ENCODE measurements at regions of chr12 and their contacts with region 1.

Region 1: GRCh38 chr12:22624870-22625761 is at the start of gene ETNK1:
- DNase-seq: peak; percentile 73 to 95 (median 81)
- ATAC-seq: peak; percentile 91
- H3K4me3 ChIP-seq: peak within 1 kb of the TSS; percentile 56
- H3K27ac ChIP-seq: peak within 1 kb of the TSS; percentile 93
- H3K4me1 ChIP-seq: peaks cover 5 to 10% of the 10 kb centered on the region in 2 experiments; a peak in 3 of 5 replicates
- H3K27me3 ChIP-seq: no peaks in the 10 kb centered on the region
- CTCF ChIP-seq: no peak
- EP300 ChIP-seq: no peak
- POLR2A ChIP-seq: peak; percentile 94
- RAD21 ChIP-seq: no peak
- polyA plus RNA-seq, gene ETNK1: 36.0 to 47.5 TPM

Region 2: GRCh38 chr12:20722142-20722541 is 1903.0 kb before region 1 on chr12:
- CTCF ChIA-PET with region 1: no interaction called
- POLR2A ChIA-PET with region 1: no interaction called
- in situ Hi-C with region 1: no loop called
- intact Hi-C with region 1: no loop called
- DNase-seq: no peak
- ATAC-seq: no peak
- H3K4me3 ChIP-seq: no peak overlapping the region
- H3K27ac ChIP-seq: no peak overlapping the region
- H3K4me1 ChIP-seq: no peaks in the 10 kb centered on the region
- H3K27me3 ChIP-seq: no peaks in the 10 kb centered on the region
- CTCF ChIP-seq: no peak
- EP300 ChIP-seq: no peak
- POLR2A ChIP-seq: no peak
- RAD21 ChIP-seq: no peak

Region 3: DNA sequence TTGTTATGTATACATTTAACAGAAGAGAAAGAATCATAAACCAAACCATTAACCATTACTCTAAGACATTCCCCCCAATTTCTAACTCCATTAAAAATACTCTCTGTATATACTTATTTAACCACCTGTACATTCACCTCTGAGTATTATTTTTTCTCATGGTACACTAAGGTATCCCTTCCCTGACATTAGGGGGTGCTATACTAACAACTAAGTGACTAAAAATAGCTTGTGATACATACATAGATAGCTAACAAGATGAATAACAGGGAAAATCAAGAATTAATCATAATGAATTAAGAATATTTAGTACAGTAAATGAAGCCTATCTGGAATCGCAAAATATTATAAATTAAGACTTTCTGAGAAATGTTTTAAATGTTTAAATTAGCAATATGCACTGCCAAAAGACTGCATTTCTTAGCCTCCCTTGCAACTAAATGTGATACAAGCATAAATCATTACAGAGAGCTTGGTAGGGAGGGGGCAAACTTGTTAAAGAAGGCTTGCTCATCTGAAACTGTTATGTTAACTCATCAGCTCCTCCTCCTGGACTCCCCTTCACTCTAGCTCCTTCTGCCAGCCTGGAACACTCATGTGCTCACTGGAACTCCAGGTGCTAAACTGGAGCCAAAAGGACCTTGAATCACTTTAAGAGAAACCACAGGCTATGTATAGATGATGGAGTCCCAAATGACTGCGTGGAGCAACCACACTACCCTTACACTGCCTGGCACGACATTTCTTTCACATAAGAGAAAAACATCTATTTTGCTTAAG is 95.6 kb before region 1 on chr12:
- CTCF ChIA-PET with region 1: no interaction called
- POLR2A ChIA-PET with region 1: no interaction called
- in situ Hi-C with region 1: no loop called
- intact Hi-C with region 1: loop called (anchors 5 kb)
- DNase-seq: peak; percentile 6 to 25 (median 22)
- ATAC-seq: peak; percentile 81
- H3K4me3 ChIP-seq: no peak overlapping the region
- H3K27ac ChIP-seq: no peak overlapping the region
- H3K4me1 ChIP-seq: no peaks in the 10 kb centered on the region
- H3K27me3 ChIP-seq: no peaks in the 10 kb centered on the region
- CTCF ChIP-seq: peak in 1 of 3 experiments; percentile 52; a peak in 3 of 6 replicates
- EP300 ChIP-seq: no peak
- POLR2A ChIP-seq: no peak
- RAD21 ChIP-seq: peak in 1 of 2 experiments; percentile 45; a peak in 3 of 4 replicates

Region 4: DNA sequence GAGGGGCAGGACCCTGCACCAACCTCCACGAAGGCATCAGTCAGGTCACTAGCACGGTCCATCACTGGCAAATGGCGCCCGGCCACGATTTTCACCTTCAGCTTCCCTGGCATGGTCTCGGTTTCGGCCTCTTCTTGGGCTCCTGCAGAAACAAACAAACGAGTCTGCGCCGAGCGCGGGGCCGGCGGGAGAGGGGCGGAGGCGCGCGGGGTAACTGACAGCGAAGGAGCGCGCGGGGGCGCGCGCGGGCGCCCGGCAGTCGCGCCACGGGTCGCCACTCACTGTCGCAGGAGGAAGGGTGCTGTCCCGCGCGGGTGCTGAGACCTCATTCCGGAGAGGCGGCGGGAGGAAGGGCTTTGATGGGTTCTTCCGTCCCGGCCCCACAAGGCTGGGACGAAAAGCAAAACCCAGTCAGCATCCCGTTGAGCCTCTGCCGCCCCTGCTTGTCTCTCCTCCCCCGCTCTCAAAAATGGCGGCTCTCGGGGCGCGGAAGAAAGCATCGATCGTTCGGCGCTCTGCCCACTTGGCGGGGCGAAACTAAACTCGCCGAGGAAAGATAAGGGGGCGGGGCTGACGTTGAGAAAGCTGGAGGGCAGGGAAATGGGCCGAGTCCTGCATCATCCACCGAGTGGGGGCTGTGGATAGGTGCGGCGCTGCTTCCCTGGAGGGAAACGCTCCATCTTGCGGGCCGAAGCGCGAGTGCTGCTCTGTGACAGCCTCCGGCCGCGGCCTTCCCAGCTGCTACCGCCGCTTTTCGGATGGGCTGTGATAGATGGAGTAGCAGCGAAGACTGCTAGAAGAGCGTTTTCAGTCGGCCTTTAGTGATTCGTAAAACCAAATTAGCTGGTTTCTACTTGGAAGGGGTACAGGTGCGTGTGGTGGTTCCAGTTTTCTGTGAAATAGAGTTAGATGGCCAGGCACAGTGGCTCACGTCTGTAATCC is 80.8 kb before region 1 on chr12 and contains the start of gene C2CD5:
- CTCF ChIA-PET with region 1: no interaction called
- POLR2A ChIA-PET with region 1: no interaction called
- in situ Hi-C with region 1: no loop called
- intact Hi-C with region 1: loop called (anchors 5 kb)
- DNase-seq: peak; percentile 76 to 96 (median 82)
- ATAC-seq: peak; percentile 93
- H3K4me3 ChIP-seq: peak within 1 kb of the TSS; percentile 56
- H3K27ac ChIP-seq: peak within 1 kb of the TSS; percentile 94
- H3K4me1 ChIP-seq: peaks cover 15 to 18% of the 10 kb centered on the region in 2 experiments; a peak in 4 of 5 replicates
- H3K27me3 ChIP-seq: no peaks in the 10 kb centered on the region
- CTCF ChIP-seq: peak; percentile 26 to 57 (median 51); a peak in 3 of 6 replicates
- EP300 ChIP-seq: no peak; the same call in 1 of the 2 replicates
- POLR2A ChIP-seq: peak; percentile 94
- RAD21 ChIP-seq: peak in 1 of 2 experiments; percentile 25; a peak in 3 of 4 replicates
- polyA plus RNA-seq, gene C2CD5: 5.1 to 9.3 TPM

Region 5: DNA sequence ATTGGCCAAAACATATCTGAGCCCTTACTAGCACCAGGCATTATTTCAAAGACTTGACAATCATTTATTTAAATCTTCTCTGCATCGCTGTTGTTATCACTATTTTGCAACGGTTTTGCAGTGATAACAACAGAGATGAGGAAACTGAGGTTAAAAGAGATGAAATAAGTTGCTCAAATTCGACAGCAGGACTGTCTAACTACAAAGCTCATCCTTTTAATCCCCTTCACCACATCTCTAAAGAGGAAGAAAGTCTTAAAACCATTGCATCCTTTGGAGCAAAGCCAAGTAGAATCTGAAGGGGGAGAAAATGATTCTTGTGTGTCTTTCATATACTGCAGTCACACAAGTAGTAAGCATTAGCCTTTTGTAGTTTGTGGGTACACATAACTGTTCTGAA is 15.0 kb before region 1 on chr12:
- CTCF ChIA-PET with region 1: no interaction called
- POLR2A ChIA-PET with region 1: no interaction called
- in situ Hi-C with region 1: no loop called
- intact Hi-C with region 1: no loop called
- DNase-seq: no peak
- ATAC-seq: no peak
- H3K4me3 ChIP-seq: no peak overlapping the region
- H3K27ac ChIP-seq: no peak overlapping the region
- H3K4me1 ChIP-seq: no peaks in the 10 kb centered on the region
- H3K27me3 ChIP-seq: no peaks in the 10 kb centered on the region
- CTCF ChIP-seq: no peak
- EP300 ChIP-seq: no peak
- POLR2A ChIP-seq: no peak
- RAD21 ChIP-seq: no peak

Region 6: DNA sequence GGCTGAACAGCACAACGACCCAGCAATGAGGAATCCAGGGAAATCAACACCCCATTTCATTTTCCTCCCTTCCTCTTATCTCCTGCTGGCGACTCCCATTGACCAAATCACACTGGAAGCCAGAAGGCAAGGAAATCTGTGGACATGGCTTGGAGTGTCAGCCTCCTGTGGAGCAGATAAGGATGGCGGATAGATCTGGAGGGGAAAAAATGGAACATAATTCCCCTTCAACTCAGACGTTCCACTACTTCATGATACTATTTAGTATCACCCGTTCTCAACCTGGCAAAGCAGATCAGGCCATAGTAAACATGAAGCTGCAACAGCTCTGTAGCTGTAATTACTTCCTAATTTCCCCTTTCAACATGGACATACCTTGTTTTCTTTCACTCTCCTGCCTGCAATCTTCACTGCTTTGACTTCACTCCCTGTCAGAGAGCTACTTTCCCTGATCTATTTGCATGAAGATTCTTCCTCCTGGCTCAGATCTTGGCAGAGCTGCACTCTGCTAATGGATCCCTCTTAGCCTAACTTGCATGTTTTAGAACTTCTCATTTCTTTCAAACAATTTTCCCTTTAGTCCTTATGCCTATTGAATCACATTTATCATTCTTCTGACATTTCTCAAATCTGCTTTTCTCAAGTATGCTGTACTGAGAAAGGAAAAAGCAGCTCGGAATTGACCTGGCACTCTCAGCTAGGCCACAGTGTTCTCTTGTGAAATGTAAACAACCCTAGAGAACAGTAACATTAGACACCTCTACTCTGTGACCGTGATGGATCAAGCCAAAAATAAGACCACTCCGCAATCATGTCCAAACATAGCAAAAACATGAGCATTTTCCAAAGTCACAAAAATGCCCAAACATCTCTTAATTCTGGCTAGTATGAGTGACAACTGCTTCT is 134.9 kb after region 1 on chr12:
- CTCF ChIA-PET with region 1: no interaction called
- POLR2A ChIA-PET with region 1: no interaction called
- in situ Hi-C with region 1: no loop called
- intact Hi-C with region 1: no loop called
- DNase-seq: no peak
- ATAC-seq: no peak
- H3K4me3 ChIP-seq: no peak overlapping the region
- H3K27ac ChIP-seq: no peak overlapping the region
- H3K4me1 ChIP-seq: no peaks in the 10 kb centered on the region
- H3K27me3 ChIP-seq: no peaks in the 10 kb centered on the region; a peak in 1 of 5 replicates
- CTCF ChIP-seq: no peak
- EP300 ChIP-seq: no peak
- POLR2A ChIP-seq: no peak
- RAD21 ChIP-seq: no peak

Region 7: DNA sequence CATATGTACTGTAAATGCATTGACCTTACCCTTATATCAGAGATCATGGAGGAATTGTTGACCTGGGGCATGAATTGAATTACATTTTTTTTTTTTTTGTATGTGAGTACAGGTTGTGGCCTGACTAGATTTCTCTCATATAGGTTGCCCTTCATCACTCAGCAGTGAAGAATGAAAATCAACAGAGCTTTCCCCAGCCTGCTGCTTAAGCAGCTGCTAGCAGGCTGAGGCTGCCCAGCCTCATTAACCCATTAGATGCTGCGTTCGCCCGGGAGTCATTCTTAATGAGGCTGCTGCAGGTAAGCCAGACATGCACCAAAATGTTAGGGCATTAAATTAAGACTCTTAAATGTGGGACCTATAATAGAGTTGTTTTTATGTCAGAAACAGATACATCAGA is 235.8 kb after region 1 on chr12:
- CTCF ChIA-PET with region 1: no interaction called
- POLR2A ChIA-PET with region 1: no interaction called
- in situ Hi-C with region 1: no loop called
- intact Hi-C with region 1: no loop called
- DNase-seq: no peak
- ATAC-seq: no peak
- H3K4me3 ChIP-seq: no peak overlapping the region
- H3K27ac ChIP-seq: no peak overlapping the region
- H3K4me1 ChIP-seq: no peaks in the 10 kb centered on the region
- H3K27me3 ChIP-seq: no peaks in the 10 kb centered on the region
- CTCF ChIP-seq: no peak
- EP300 ChIP-seq: no peak
- POLR2A ChIP-seq: no peak
- RAD21 ChIP-seq: no peak

Measured in K562 (cell line).